CD8-positive, alpha-beta memory T cell (primary cell): ENCODE measurements at regions of chr2 and their contacts with region 1.

Region 1: DNA sequence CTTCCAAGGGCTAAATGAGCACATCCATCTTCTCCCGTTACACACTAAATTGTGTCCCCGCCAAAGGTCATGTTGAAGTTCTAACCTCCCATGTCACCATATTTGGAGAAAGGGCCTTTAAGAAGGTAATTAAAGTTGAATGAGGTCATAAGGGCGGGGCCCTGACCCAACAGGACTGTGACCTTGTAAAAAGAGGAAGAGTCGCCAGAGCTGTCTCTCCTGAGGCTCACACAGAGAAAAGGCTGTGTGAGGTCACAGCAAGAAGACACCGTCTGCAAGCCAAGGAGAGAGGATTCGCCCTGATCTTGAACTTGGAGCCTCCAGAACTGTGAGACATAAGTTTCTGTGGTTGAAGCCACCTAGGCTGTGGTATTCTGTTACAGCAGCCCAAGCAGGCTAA is 24.1 kb downstream of the TRABD2A start:
- DNase-seq: no peak
- H3K4me3 ChIP-seq: peak overlapping the region; percentile 36
- H3K4me3 Mint-ChIP-seq: peak overlapping the region in 6 of 7 donors; percentile 1 to 54 (median 38)
- H3K27ac ChIP-seq: no peak overlapping the region
- H3K27ac Mint-ChIP-seq: peak overlapping the region; percentile 47 to 97 (median 80)
- H3K4me1 ChIP-seq: peaks cover 96% of the 10 kb centered on the region
- H3K4me1 Mint-ChIP-seq: peaks cover 82 to 96% (median 95%) of the 10 kb centered on the region in 3 donors
- H3K27me3 ChIP-seq: no peaks in the 10 kb centered on the region
- H3K27me3 Mint-ChIP-seq: no peaks in the 10 kb centered on the region

Region 2: DNA sequence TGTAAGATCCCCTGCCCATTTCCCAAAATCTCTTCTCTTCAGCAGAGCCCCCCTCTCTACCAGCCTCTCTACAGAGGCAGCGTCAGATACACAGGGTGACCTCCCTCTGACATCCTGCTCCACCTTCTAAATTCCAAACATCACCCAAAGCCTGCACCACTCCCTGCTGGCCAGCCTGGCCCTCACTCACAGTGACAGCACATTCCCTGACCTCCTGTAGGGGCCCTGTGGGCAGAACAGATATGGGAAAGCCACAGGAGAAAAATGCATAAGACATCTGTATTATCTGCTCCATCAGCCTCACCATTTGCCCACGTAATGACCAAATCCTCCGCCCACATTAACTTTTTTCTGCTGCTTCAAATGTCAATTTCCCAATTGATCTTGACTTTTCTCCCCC is 16.5 kb before region 1 on chr2:
- CTCF ChIA-PET with region 1: interaction called, 12 read pairs
- POLR2A ChIA-PET with region 1: no interaction called
- DNase-seq: peak in 1 of 5 donors; percentile 35
- H3K4me3 ChIP-seq: peak overlapping the region; percentile 25
- H3K4me3 Mint-ChIP-seq: peak overlapping the region; percentile 15 to 81 (median 71)
- H3K27ac ChIP-seq: peak overlapping the region; percentile 2
- H3K27ac Mint-ChIP-seq: peak overlapping the region; percentile 83 to 98 (median 93)
- H3K4me1 ChIP-seq: peaks cover 88% of the 10 kb centered on the region
- H3K4me1 Mint-ChIP-seq: peaks cover 75 to 92% (median 91%) of the 10 kb centered on the region in 3 donors
- H3K27me3 ChIP-seq: no peaks in the 10 kb centered on the region
- H3K27me3 Mint-ChIP-seq: peaks cover 0 to 3% of the 10 kb centered on the region in 2 donors

Region 3: GRCh38 chr2:84846041-84846663 is 10.6 kb before region 1 on chr2:
- CTCF ChIA-PET with region 1: interaction called, 12 read pairs
- POLR2A ChIA-PET with region 1: no interaction called
- DNase-seq: peak in 3 of 5 donors; percentile 62 to 85 (median 75)
- H3K4me3 ChIP-seq: peak overlapping the region; percentile 40
- H3K4me3 Mint-ChIP-seq: peak overlapping the region; percentile 25 to 83 (median 69)
- H3K27ac ChIP-seq: peak overlapping the region; percentile 12
- H3K27ac Mint-ChIP-seq: peak overlapping the region; percentile 85 to 98 (median 94)
- H3K4me1 ChIP-seq: peaks cover 96% of the 10 kb centered on the region
- H3K4me1 Mint-ChIP-seq: peaks cover 86 to 96% (median 95%) of the 10 kb centered on the region in 3 donors
- H3K27me3 ChIP-seq: no peaks in the 10 kb centered on the region
- H3K27me3 Mint-ChIP-seq: no peaks in the 10 kb centered on the region

Region 4: DNA sequence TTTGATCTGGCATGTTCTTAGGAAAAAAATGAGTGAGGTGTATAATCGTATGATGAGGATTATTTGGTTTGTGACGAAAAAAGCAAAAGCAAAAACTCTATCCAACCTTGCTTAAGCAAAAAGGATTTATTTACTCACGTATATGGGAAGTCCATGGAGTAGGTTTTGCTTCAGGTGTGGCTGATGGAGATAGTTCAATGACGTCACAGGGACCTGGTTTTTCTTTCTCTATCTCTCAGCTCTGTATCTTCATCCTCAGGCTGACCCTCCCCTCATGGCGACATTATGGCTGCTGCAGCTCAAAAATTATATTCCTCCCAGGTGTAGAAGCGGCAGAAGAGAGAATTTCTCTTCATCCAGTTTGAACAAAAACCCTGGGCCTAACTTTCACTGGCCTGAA is 57.5 kb after region 1 on chr2:
- CTCF ChIA-PET with region 1: no interaction called
- POLR2A ChIA-PET with region 1: no interaction called
- DNase-seq: no peak
- H3K4me3 ChIP-seq: no peak overlapping the region
- H3K4me3 Mint-ChIP-seq: no peak overlapping the region
- H3K27ac ChIP-seq: no peak overlapping the region
- H3K27ac Mint-ChIP-seq: no peak overlapping the region
- H3K4me1 ChIP-seq: peaks cover 21% of the 10 kb centered on the region
- H3K4me1 Mint-ChIP-seq: peaks cover 12 to 20% (median 12%) of the 10 kb centered on the region in 3 donors
- H3K27me3 ChIP-seq: no peaks in the 10 kb centered on the region
- H3K27me3 Mint-ChIP-seq: peaks cover 0 to 1% of the 10 kb centered on the region in 2 donors

Region 5: DNA sequence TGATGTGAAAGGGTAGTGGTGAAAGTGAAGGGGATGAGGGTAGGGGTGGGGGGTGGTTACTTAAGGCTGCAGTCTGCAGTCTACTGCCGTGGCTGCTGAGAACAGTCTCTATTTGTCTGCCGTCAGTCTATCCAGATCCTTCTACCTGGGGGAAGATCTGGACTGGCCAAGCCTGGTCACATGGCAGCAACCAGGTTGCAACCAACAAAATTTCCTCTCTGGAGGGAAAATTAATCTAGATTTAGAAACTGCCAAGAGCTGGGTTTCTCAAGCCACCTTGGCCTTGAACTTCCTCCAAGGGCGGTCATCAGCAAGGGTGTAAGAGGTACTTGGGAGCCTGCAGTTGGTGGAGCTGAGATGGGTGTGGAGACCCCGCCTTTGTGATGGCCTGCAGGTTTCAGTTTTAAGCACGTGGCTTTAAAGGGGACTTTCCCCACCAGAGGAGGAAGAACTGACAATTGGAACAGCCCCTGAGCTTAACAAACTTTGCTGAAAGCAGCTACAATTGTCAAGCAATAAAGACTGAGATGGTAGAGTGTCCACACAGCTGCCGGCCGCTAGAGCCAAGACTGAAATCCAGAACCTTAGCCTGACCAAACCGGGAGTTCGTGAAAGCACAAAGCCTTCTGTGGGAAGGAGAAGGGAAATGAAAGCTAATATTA is 82.8 kb after region 1 on chr2:
- CTCF ChIA-PET with region 1: no interaction called
- POLR2A ChIA-PET with region 1: no interaction called
- DNase-seq: peak; percentile 57 to 82 (median 70)
- H3K4me3 ChIP-seq: peak overlapping the region; percentile 54
- H3K4me3 Mint-ChIP-seq: peak overlapping the region; percentile 39 to 91 (median 81)
- H3K27ac ChIP-seq: peak overlapping the region; percentile 47
- H3K27ac Mint-ChIP-seq: peak overlapping the region; percentile 92 to 100 (median 97)
- H3K4me1 ChIP-seq: peaks cover 21% of the 10 kb centered on the region
- H3K4me1 Mint-ChIP-seq: peaks cover 21 to 36% (median 36%) of the 10 kb centered on the region in 3 donors
- H3K27me3 ChIP-seq: no peaks in the 10 kb centered on the region
- H3K27me3 Mint-ChIP-seq: no peaks in the 10 kb centered on the region